ENCODE measurements at regions of chr22 and their contacts with region 1.

Region 1: GRCh38 chr22:20758688-20759087 is 15.2 kb upstream of the SERPIND1 start:
- DNase-seq: no peak
- H3K4me3 ChIP-seq: no peak overlapping the region
- H3K27ac ChIP-seq: no peak overlapping the region
- H3K4me1 ChIP-seq: no peaks in the 10 kb centered on the region
- H3K27me3 ChIP-seq: no peaks in the 10 kb centered on the region
- CTCF ChIP-seq: no peak

Region 2: DNA sequence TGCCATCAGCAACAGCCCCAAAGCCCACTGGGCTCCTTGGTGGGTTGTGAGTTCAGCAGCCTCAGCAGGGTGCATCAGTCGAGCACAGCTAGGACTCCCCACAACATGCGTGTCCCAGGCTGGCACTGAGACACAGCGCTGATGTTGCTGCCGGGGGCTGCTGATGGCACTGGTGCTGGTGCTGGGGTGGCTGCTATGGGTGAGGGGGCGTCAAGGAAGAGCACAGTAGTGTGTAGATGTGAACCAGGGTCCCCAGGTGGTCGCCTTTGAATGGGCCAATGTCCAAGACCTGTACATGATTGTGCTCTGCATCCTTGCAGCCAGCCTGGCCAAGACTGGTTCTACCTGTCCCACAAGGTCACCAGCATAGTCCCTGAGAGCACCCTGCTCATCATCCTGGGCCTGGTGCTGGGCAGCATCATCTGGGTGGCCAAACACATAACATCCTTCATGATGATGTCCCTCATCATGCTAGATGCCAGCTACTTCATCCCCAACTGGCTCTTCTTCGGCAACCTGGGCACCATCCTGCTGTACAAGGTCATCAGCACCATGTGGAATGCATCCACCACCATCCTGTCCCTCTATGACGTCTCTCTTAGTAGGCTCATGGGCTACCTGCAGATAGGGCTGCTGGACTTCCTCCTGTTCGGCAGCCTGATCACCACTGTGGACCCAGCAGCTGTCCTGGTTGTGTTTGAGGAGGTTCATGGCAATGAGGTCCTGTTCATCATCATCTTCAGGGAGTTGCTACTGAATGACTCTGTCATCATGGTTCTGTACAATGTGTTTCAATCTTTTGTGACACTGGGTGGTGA is 105.9 kb before region 1 on chr22:
- intact Hi-C with region 1: no loop called
- DNase-seq: no peak
- H3K4me3 ChIP-seq: no peak overlapping the region
- H3K27ac ChIP-seq: no peak overlapping the region
- H3K4me1 ChIP-seq: no peaks in the 10 kb centered on the region
- H3K27me3 ChIP-seq: no peaks in the 10 kb centered on the region
- CTCF ChIP-seq: no peak

Region 3: DNA sequence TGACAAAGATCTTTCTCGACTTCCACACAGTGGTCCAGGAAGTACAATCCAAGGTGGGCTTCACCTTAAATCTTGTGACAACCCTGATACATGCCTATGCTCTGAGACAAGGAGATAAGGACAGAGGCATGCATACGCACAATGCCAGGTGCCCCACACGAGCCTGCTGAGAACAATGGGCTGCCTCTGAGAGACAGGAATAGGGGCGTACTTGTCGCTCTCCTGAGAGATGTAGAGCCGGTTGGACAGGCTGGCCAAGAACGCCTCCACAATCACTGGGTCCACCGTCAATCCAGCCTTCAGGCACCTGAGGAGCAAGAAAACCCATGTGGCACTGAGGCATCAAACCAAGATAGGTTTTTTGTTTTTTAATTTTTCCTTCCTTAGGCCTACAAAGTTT is 40.8 kb after region 1 on chr22:
- intact Hi-C with region 1: loop called (anchors 5 kb)
- DNase-seq: no peak
- H3K4me3 ChIP-seq: no peak overlapping the region
- H3K27ac ChIP-seq: no peak overlapping the region
- H3K4me1 ChIP-seq: no peaks in the 10 kb centered on the region
- H3K27me3 ChIP-seq: no peaks in the 10 kb centered on the region
- CTCF ChIP-seq: no peak

Region 4: DNA sequence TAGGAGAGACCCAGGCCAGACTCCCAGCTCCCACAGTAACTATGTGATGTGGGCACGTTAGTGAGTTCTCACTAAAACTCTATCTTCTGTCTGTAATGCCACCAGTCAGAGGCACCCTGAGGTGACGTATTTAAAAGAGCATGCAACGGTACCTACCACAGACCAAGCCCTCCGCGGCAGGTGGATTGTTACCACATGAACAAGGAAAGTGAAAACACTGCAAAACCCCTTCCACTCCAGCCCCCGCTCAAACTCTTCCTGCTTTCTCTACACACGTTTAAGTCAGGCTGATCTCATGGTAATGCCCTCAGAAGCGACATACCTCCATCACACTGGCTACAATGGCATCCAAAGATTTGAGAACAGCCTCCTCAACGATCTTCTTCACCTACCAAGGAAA is 52.0 kb after region 1 on chr22:
- intact Hi-C with region 1: no loop called
- DNase-seq: no peak
- H3K4me3 ChIP-seq: no peak overlapping the region
- H3K27ac ChIP-seq: no peak overlapping the region
- H3K4me1 ChIP-seq: no peaks in the 10 kb centered on the region
- H3K27me3 ChIP-seq: no peaks in the 10 kb centered on the region
- CTCF ChIP-seq: no peak

Region 5: DNA sequence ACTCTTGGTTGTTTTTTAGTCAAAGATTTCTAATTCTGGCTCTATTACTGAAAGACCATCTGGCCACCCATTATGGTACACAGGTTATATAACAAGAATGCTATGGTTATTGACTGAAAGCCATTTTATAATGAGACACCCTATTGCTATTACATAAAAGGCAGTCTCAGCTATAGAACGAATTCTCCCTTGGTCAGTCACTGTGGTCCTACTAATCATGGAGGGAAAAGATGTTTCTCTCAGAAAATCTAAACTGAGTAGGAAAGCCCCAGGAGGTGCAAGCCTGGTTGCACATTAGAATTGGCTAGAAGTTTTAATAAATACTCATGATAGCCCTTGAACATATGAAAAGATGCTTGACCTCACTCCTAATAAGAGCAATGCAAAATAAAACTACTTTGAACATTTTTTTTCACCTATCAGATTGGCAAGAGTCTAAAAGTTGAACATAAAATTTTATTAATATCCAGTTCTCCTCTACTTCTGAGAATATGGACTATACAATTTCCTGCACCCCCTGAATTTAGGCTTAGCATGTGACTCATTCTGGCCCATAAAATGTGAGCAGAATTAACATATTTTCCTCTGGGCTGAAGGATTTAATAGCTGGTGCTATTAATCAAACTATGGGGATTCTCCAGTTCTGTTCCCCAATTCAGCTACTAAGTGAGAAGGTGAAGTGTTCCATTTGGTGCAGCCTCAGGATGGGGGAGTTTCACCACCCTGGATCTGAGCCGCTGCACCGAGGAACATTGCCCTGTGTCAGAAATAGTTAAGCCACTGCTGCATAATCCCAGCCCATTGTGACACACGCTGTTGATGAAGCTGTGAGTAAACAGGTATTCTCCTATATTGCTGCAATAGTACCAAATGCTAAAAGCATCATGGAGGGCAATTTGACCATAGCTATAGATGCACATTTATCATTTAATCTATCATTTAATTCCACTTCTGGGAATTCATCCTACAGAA is 147.0 kb after region 1 on chr22:
- intact Hi-C with region 1: no loop called
- DNase-seq: no peak
- H3K4me3 ChIP-seq: no peak overlapping the region
- H3K27ac ChIP-seq: no peak overlapping the region
- H3K4me1 ChIP-seq: no peaks in the 10 kb centered on the region
- H3K27me3 ChIP-seq: no peaks in the 10 kb centered on the region
- CTCF ChIP-seq: no peak

Region 6: DNA sequence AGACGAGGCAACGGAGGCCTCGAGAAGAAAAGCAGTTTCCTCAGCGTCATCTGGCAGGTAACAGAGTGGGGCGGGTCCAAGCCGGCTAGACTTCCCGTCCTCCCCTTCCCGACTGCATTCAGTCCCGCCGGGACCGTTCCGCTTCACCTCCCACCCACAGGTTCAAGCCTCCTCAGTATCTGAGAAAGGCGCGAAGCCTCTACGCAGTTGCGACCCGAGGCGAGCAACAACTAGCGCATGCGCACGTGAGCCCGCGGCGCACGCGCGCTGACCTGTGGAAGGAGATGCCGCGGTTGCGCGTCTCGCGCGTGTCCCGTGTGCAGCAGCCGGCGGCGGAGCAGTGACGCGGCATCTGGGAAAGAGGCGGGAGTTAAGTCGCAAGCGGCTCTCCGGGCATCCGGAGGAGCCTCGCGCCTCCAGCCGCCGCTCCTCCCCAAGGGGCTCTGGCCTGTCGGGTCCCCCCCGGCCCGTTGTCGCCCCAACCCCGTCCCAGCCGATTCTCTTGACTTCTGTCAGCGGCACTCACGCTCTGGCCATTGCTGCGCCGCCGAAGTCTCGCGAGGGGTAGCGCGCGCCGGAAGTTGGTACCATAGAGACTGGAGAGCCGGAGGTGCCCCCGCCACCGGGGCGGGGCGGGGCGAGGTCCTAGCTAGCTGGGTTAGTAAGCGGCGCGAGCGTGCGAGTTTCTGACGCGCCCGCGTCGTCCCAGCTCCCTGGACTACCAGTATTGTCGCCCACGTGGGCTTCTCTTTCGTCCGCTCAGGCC is 243.1 kb after region 1 on chr22 and contains the start of gene THAP7:
- intact Hi-C with region 1: no loop called
- DNase-seq: peak; percentile 96
- H3K4me3 ChIP-seq: peak within 1 kb of the TSS; percentile 68
- H3K27ac ChIP-seq: peak within 1 kb of the TSS; percentile 99
- H3K4me1 ChIP-seq: peaks cover 20% of the 10 kb centered on the region
- H3K27me3 ChIP-seq: no peaks in the 10 kb centered on the region
- CTCF ChIP-seq: no peak
- total RNA-seq, gene THAP7: 12.9 to 23.3 TPM

Measured in colonic mucosa (tissue), 4 donors.